ENCODE measurements at regions of chr16 and their contacts with region 1.

Region 1: GRCh38 chr16:74713325-74713724 is 12.7 kb upstream of the MLKL start:
- DNase-seq: no peak
- H3K4me3 ChIP-seq: no peak overlapping the region
- H3K27ac ChIP-seq: no peak overlapping the region
- H3K4me1 ChIP-seq: no peaks in the 10 kb centered on the region
- H3K27me3 ChIP-seq: no peaks in the 10 kb centered on the region
- CTCF ChIP-seq: no peak

Region 2: DNA sequence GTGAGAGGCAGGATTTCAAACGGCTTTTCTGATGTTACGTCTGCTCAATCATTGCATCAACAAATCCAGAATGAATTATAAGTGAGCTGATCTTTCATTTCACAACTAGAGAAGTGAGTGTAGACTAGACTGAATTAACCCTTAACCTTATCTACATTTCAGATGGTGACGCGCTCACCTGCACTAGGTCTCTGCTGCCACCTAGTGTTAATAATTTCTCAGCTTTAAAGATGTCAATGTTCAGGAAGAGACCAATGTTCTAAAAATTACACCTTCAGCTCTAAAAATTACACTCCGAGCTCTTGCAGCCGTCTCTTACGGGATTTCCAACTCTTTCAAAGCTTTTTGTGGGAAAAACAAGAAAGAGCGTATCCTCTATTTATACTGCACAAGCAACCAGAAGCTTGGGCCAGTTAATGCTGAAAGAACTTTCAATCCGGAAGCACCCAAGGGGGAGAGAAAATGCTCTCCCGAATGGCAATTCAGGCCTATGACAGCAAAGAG is 149.5 kb after region 1 on chr16:
- intact Hi-C with region 1: loop called (anchors 5 kb)
- DNase-seq: peak in 3 of 5 donors; percentile 20 to 63 (median 62)
- H3K4me3 ChIP-seq: no peak overlapping the region
- H3K27ac ChIP-seq: no peak overlapping the region
- H3K4me1 ChIP-seq: peaks cover 0 to 4% (median 0%) of the 10 kb centered on the region in 3 donors
- H3K27me3 ChIP-seq: no peaks in the 10 kb centered on the region
- CTCF ChIP-seq: peak; percentile 78

Region 3: DNA sequence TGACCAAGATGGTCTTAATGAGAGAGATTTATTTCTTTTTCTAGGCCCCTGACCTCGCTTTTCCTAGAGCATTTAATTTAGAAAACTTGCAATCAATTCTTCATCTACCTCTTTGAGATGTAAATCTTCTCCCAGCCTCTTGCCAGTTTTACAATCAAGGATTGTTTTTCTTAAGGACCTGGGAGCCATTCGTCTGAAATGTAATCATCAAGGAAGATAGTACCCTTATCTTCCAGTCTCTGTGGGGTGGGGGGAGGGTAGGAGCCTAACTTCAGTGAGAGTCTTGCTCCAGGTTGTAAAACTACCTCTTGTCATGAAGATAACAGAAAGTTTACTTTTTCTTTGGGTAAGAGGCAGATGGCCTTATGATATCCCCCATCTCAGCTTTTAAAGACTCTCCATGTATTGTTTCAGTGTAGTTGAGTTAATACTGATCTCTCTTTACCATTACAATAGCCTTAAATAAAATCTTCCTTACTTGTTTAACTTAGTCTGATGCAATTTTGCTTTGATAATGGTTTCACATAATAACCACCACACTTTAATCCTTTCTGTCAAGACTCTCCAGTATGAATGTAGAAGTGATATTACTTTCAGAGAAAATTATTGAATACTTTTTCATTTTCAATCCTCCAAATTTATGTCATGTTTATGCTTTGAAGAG is 1123.2 kb after region 1 on chr16:
- intact Hi-C with region 1: no loop called
- DNase-seq: peak in 3 of 5 donors; percentile 19 to 63 (median 50)
- H3K4me3 ChIP-seq: no peak overlapping the region
- H3K27ac ChIP-seq: no peak overlapping the region
- H3K4me1 ChIP-seq: no peaks in the 10 kb centered on the region
- H3K27me3 ChIP-seq: no peaks in the 10 kb centered on the region
- CTCF ChIP-seq: no peak

Measured in kidney (tissue), 22 donors.